HEK293T (cell line): ENCODE measurements at regions of chr3 and their contacts with region 1.

Region 1: GRCh38 chr3:42804106-42804830 is at the start of gene HIGD1A:
- DNase-seq: peak; percentile 93

Region 2: DNA sequence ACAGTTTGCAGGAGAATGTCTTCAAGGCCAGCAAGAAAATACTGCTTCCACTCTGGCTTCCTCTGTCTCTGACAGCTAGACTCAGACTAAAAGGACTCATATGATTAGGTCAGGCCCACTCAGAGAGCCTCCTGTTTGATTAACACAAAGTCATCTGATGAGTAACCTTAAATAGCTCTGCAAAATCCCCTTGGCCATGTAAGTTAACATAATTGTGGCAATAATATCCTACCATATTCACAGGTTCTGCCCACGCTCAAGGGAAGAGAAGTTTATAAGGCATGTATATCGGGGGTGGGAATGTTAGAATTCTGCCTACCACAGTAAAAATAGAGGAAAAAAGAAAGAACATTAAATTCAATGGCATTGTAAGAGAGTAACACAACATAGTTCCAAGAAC is 81.0 kb before region 1 on chr3:
- CTCF ChIA-PET with region 1: interaction called, 11 read pairs
- POLR2A ChIA-PET with region 1: no interaction called
- DNase-seq: no peak

Region 3: DNA sequence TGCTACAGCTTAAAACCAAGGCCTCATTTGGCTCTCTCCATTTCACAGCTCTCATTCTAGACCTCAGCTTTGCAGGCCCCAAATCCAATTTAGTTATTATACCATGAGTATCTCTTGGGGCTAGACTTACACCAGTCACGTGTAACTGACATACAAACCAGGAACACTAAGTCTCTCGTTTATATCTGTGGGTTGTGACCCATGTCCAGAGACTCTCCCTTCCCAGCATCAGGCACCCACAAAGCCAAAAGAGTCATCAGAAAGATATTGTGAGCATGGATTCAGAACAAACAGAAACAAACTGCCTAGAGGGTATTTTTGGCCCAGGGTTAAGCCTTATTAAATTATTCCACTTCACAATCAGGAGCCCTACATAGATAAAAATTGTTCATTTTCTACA is 25.6 kb before region 1 on chr3:
- CTCF ChIA-PET with region 1: no interaction called
- POLR2A ChIA-PET with region 1: no interaction called
- DNase-seq: no peak

Region 4: DNA sequence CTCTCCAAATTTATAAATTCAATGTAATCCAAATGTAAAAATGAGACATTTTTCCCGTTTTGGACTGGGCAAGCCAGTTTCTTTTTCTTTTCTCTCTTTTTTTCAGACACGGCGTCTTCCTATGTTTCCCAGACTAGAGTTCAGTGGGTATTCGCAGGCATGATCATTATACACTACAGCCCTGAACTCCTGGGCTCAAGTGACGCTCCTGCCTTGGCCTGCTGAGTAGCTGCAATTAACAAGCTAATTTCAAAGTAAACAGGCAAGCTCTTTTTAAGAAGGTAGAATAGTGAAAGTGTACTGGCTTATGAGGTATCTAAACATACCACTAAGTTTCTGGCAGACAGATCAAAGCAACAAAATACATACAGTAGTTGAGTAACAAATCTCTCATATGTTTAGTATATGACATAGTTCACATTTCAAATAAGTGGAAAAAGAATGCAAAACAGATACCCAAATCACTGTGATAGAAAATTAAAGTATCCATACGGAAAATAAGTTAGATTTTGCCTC is 13.5 kb before region 1 on chr3:
- CTCF ChIA-PET with region 1: no interaction called
- POLR2A ChIA-PET with region 1: interaction called, 15 read pairs
- DNase-seq: no peak

Region 5: DNA sequence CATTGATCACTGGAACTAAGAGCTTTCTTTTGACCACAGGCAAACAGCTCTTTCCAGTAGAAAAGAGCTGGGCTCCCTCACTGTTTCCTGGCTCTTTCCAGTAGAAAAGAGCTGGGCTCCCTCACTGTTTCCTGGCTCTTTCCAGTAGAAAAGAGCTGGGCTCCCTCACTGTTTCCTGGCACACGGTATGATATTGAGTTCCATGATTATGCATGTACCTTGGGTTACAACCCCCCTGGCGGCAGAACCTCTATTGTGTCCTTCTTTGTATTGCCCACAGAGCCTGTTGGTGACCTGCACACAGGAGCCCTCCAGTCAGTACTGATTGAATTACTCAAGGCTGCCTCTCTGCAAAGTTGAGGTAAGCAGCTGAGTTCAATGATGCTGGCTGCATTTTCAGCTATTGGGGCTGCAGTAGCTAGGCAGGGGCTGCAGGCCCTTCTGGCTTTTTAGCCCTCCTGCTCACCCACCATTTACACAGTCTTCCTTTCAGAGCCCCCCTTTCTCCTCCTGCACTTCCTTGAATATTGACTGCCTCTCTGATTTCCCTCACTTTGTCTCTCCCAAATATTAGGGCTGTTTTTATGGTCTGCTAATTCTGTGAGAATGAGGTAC is 15.2 kb after region 1 on chr3:
- CTCF ChIA-PET with region 1: interaction called, 3 read pairs
- POLR2A ChIA-PET with region 1: interaction called, 36 read pairs
- DNase-seq: peak; percentile 55

Region 6: DNA sequence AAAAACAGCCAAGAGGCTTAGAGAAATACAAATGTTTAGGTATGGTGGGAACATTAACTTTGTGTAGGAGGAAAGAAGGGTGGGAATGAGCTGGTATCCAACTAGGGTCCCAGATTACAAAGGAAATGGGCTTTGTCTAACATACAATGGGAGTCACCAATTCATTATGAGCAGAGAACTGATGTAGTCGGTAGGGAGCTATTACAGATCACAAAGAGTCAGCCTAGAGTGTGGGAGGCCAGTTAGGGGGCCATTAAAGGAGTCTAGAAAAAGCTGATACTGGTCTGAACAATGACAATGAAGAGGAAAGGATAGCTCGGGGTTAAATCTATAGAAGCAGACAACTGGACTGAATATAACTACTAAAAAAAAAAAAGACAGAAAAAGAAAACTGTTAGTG is 802.0 kb after region 1 on chr3:
- CTCF ChIA-PET with region 1: no interaction called
- POLR2A ChIA-PET with region 1: no interaction called
- DNase-seq: no peak